Left cardiac atrium (tissue), 4 donors: ENCODE measurements at regions of chr12 and their contacts with region 1.

Region 1: GRCh38 chr12:39764944-39765560 is 145.4 kb upstream of the ABCD2 start:
- DNase-seq: no peak
- ATAC-seq: peak; percentile 29 to 50

Region 2: DNA sequence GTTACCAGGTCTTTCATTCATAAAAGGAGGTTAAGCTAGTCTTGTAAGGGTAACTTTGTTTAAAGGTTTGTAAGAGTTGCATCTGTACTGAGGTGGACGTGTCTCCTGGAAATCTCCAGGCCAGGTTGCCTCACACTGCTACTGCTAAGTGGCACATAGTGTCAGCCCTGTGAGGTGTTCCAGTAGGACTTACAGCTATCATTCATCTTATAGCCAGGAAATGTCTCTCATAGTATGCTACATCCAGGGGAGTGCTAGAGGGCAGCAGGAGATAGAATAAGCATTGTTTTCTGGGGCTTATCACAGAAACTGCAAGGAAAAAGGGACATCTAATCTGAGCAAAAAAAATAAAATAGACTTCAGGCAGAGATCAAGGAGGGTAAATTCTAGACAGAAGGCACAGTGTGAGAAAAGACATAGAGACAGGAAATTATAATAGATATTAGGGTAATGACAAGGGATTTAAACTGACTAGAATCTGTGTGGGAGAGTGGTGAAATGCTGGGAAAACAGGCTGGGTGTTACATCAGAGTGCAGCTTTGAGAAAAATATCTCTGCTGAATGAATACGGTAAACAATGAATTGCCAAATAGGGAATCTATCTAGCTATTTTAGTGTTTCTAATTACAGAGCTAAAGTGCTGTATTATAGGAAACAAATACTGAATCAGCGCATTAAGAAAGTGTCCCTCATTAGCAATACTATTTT is 59.6 kb after region 1 on chr12:
- intact Hi-C with region 1: loop called in 1 of 2 experiments (anchors 2 kb)
- DNase-seq: no peak
- ATAC-seq: peak; percentile 37 to 44

Region 3: GRCh38 chr12:39990122-39991101 is 225.4 kb after region 1 on chr12:
- intact Hi-C with region 1: loop called (anchors 5 to 10 kb)
- DNase-seq: peak; percentile 53
- ATAC-seq: peak; percentile 55 to 81

Region 4: DNA sequence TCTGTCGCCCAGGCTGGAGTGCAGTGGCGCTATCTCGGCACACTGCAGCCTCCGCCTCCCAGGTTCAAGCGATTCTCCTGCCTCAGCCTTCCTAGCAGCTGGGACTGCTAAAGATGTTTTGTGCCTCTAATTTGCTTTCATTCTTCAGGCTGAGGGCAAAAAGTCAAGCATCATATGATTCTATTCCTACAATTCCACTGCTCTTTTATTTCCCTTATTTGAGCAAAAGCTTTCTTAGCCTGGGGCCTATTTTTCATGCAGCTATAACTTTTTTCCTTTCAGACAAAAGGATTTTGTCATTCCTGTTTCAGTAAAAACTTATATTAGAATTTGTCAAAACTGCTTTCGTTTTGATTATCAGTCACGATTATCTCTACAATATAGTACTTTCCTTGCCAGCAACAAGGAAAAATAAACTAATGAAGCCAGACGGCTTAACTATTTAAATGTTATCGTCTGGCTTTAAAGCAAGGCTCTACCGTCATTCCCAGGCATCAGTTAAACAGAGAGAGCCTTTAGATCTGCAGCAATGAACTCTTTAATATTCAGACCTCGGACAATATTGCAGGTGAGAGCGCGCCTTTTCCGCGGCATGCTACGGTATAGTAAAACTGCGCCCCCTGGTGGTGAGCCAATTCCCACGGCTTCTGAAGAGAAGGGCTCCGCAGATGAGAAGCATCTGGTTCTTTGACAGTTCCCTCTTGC is 342.2 kb after region 1 on chr12:
- intact Hi-C with region 1: loop called (anchors 5 to 10 kb)
- DNase-seq: peak; percentile 93
- ATAC-seq: peak; percentile 33 to 38